ENCODE measurements at regions of chr18 and their contacts with region 1.

Region 1: GRCh38 chr18:23629444-23629946 is 33.2 kb downstream of the ANKRD29 start:
- DNase-seq: no peak
- H3K4me3 ChIP-seq: no peak overlapping the region
- H3K4me3 Mint-ChIP-seq: no peak overlapping the region
- H3K27ac ChIP-seq: no peak overlapping the region
- H3K27ac Mint-ChIP-seq: no peak overlapping the region
- H3K4me1 ChIP-seq: no peaks in the 10 kb centered on the region
- H3K4me1 Mint-ChIP-seq: no peaks in the 10 kb centered on the region
- H3K27me3 ChIP-seq: no peaks in the 10 kb centered on the region
- H3K27me3 Mint-ChIP-seq: peaks cover 0 to 6% (median 0%) of the 10 kb centered on the region in 3 donors
- CTCF ChIP-seq: no peak

Region 2: GRCh38 chr18:23735021-23735464 is 105.5 kb after region 1 on chr18:
- intact Hi-C with region 1: no loop called
- DNase-seq: no peak
- H3K4me3 ChIP-seq: no peak overlapping the region
- H3K4me3 Mint-ChIP-seq: no peak overlapping the region
- H3K27ac ChIP-seq: no peak overlapping the region
- H3K27ac Mint-ChIP-seq: peak overlapping the region in 1 of 7 donors; percentile 17
- H3K4me1 ChIP-seq: peaks cover 11 to 18% of the 10 kb centered on the region in 2 donors
- H3K4me1 Mint-ChIP-seq: peaks cover 35% of the 10 kb centered on the region
- H3K27me3 ChIP-seq: no peaks in the 10 kb centered on the region
- H3K27me3 Mint-ChIP-seq: peaks cover 2 to 5% (median 4%) of the 10 kb centered on the region in 3 donors
- CTCF ChIP-seq: no peak

Region 3: GRCh38 chr18:23812546-23813440 is 183.3 kb after region 1 on chr18:
- intact Hi-C with region 1: loop called in 1 of 2 experiments (anchors 10 kb)
- DNase-seq: no peak
- H3K4me3 ChIP-seq: no peak overlapping the region
- H3K4me3 Mint-ChIP-seq: no peak overlapping the region
- H3K27ac ChIP-seq: no peak overlapping the region
- H3K27ac Mint-ChIP-seq: no peak overlapping the region
- H3K4me1 ChIP-seq: no peaks in the 10 kb centered on the region
- H3K4me1 Mint-ChIP-seq: peaks cover 5% of the 10 kb centered on the region
- H3K27me3 ChIP-seq: no peaks in the 10 kb centered on the region
- H3K27me3 Mint-ChIP-seq: peaks cover 1 to 7% (median 4%) of the 10 kb centered on the region in 3 donors
- CTCF ChIP-seq: peak; percentile 59

Measured in CD14-positive monocyte (primary cell).